ENCODE measurements at regions of chr9 and their contacts with region 1.

Region 1: GRCh38 chr9:107137495-107138202 is 145.4 kb upstream of the RAD23B start:
- DNase-seq: peak; percentile 29
- ATAC-seq: peak; percentile 69
- H3K4me3 ChIP-seq: no peak overlapping the region
- H3K27ac ChIP-seq: no peak overlapping the region
- H3K4me1 ChIP-seq: peaks cover 4 to 8% of the 10 kb centered on the region in 2 experiments; a peak in 2 of 4 replicates
- H3K27me3 ChIP-seq: no peaks in the 10 kb centered on the region
- CTCF ChIP-seq: peak; percentile 64 to 93 (median 80)
- POLR2A ChIP-seq: no peak
- RAD21 ChIP-seq: peak; percentile 83

Region 2: DNA sequence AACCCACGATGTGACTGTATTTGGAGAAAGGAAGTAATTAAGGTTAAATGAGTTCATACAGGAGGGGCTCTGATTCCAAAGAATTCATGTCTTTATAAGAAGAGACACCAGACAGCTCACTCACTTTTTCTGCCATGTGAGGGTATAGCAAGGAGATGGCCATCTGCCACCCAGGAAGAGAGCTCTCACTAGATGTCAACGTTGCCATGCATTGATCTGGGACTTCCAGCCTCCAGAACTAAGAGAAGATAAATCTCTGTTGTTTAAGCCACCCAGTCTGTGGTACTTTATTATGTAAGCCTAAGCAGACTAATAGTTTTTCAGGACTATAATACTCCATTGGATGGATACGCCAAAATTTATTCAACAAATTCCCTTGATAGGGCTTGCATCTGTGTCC is 55.6 kb after region 1 on chr9:
- CTCF ChIA-PET with region 1: no interaction called
- POLR2A ChIA-PET with region 1: no interaction called
- RAD21 ChIA-PET with region 1: no interaction called
- intact Hi-C with region 1: no loop called
- DNase-seq: no peak
- ATAC-seq: no peak
- H3K4me3 ChIP-seq: no peak overlapping the region
- H3K27ac ChIP-seq: no peak overlapping the region
- H3K4me1 ChIP-seq: peaks cover 7 to 32% of the 10 kb centered on the region in 2 experiments; a peak in 3 of 4 replicates
- H3K27me3 ChIP-seq: no peaks in the 10 kb centered on the region
- CTCF ChIP-seq: no peak
- POLR2A ChIP-seq: no peak
- RAD21 ChIP-seq: no peak

Region 3: GRCh38 chr9:107213561-107214028 is 75.9 kb after region 1 on chr9:
- CTCF ChIA-PET with region 1: no interaction called
- POLR2A ChIA-PET with region 1: no interaction called
- RAD21 ChIA-PET with region 1: no interaction called
- intact Hi-C with region 1: no loop called
- DNase-seq: peak; percentile 96
- ATAC-seq: peak; percentile 79
- H3K4me3 ChIP-seq: peak overlapping the region; percentile 14 to 37; a peak in 3 of 4 replicates
- H3K27ac ChIP-seq: peak overlapping the region; percentile 94
- H3K4me1 ChIP-seq: peaks cover 59 to 80% of the 10 kb centered on the region in 2 experiments
- H3K27me3 ChIP-seq: no peaks in the 10 kb centered on the region
- CTCF ChIP-seq: no peak
- POLR2A ChIP-seq: peak; percentile 50
- RAD21 ChIP-seq: no peak

Region 4: GRCh38 chr9:107340920-107341632 is 203.4 kb after region 1 on chr9:
- CTCF ChIA-PET with region 1: interaction called, 3 read pairs
- POLR2A ChIA-PET with region 1: no interaction called
- RAD21 ChIA-PET with region 1: no interaction called
- intact Hi-C with region 1: loop called (anchors 1 kb)
- DNase-seq: peak; percentile 46
- ATAC-seq: peak; percentile 83
- H3K4me3 ChIP-seq: no peak overlapping the region
- H3K27ac ChIP-seq: peak overlapping the region; percentile 47
- H3K4me1 ChIP-seq: peaks cover 3 to 18% of the 10 kb centered on the region in 2 experiments; a peak in 3 of 4 replicates
- H3K27me3 ChIP-seq: no peaks in the 10 kb centered on the region
- CTCF ChIP-seq: peak; percentile 71 to 95 (median 94)
- POLR2A ChIP-seq: no peak
- RAD21 ChIP-seq: peak; percentile 81

Measured in HCT116 (cell line).